A549 (cell line): ENCODE measurements at regions of chr11 and their contacts with region 1.

Region 1: DNA sequence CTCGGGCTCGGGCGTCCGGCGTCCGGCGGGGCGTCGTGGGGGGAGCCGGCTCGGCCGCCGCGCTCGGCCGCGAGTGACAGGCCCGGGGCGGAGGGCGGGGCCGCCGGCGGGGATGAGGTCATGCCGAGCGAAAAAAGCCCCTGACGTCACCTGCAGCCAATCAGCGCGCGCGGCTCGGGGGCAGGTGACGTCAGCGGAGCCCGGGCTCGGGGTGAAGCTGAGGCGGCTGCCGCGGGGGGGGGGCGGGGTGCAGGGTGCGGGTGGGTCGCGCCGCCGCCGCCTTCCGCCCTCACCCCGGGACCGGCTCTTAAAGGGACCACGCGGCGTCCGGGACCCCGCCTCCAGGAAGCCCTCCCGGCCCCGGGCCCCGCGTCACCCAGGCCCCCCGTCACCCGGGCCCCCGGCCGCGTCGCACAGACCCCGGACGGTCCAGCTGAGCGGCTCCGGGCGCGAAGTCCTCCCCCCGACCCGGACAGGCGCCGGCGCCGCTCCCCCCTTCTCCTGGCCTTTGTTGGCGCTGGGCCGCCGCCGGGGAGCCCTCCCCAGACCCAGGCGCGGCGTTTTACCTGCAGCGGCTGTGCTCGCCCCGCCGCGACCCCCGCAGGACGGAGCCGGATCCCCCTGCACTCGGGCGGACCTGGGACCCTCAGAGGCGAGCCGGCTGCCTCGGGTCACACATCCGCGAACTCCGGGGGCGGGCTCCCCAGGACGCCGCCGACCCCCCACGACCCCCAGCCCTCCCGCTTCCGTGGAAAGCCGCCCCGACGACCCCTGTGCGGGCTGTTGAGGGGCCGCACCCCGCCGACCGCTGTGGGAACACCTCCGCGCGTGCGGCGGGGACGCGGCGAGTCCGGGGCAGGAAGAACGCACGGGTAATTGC is at the start of gene DUSP8:
- DNase-seq: peak; percentile 87 to 90
- ATAC-seq: peak; percentile 13 to 35
- H3K4me3 ChIP-seq: peak within 1 kb of the TSS; percentile 74
- H3K27ac ChIP-seq: peak within 1 kb of the TSS; percentile 89 to 95
- H3K4me1 ChIP-seq: peaks cover 37% of the 10 kb centered on the region
- CTCF ChIP-seq: no peak
- EP300 ChIP-seq: peak in 1 of 2 experiments; percentile 23; a peak in 1 of 5 replicates
- POLR2A ChIP-seq: no peak
- RAD21 ChIP-seq: no peak
- polyA plus RNA-seq, gene DUSP8: 2.6 and 3.6 TPM in 2 replicates

Region 2: DNA sequence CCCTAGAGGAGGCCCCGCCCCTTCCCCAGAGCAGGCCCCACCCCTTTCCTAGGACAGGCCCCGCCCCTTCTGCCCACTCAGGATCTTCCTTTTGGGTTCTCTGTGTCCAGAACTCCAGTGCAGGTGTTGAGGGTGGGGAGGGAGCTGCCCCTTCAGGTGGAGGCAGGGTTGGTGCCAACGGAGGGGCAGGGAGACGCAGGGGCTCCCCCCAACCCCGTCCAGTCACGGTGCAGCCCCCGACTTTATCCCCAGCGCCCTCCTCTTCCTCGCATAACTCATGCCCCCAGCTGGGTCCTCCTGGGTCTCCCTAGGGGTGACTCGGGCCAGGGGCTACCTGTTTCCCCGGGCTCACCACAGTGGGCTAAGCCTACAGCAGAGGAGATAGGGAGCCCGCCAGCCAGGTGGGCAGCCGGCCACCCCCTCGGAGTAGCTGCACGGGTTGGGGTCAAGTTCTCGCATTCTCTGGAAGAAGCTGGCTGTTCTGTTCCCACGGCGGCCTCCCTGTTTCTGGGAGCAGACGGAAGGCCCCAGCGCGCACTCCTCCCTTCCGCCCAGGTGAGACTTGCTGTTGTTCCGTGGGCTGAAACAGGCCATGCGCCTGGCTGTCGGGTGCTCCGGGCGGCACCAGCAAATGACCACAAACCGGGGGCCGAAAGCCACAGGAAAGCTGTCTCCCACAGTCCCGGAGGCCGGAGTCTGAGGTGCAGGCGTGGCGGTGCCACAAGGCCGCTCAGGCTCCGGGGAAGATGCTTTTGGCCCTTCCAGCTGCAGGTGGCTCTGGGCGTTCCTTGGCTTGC is 458.8 kb before region 1 on chr11:
- CTCF ChIA-PET with region 1: interaction called, 12 read pairs
- POLR2A ChIA-PET with region 1: no interaction called
- DNase-seq: no peak
- ATAC-seq: peak; percentile 28 to 34; a peak in 4 of 6 replicates
- H3K4me3 ChIP-seq: no peak overlapping the region
- H3K27ac ChIP-seq: peak overlapping the region; percentile 2 to 41; a peak in 4 of 6 replicates
- H3K4me1 ChIP-seq: 0 out of 3 replicates have a peak, but pooled peaks cover 5% of the 10 kb centered on the region
- CTCF ChIP-seq: no peak
- EP300 ChIP-seq: no peak
- POLR2A ChIP-seq: no peak
- RAD21 ChIP-seq: no peak

Region 3: GRCh38 chr11:1252371-1253102 is 319.9 kb before region 1 on chr11:
- CTCF ChIA-PET with region 1: no interaction called
- POLR2A ChIA-PET with region 1: no interaction called
- DNase-seq: no peak
- ATAC-seq: no peak
- H3K4me3 ChIP-seq: no peak overlapping the region
- H3K27ac ChIP-seq: no peak overlapping the region
- H3K4me1 ChIP-seq: no peaks in the 10 kb centered on the region
- CTCF ChIP-seq: no peak
- EP300 ChIP-seq: no peak
- POLR2A ChIP-seq: no peak
- RAD21 ChIP-seq: no peak

Region 4: GRCh38 chr11:1523779-1524178 is 48.7 kb before region 1 on chr11:
- CTCF ChIA-PET with region 1: interaction called, 15 read pairs
- POLR2A ChIA-PET with region 1: no interaction called
- DNase-seq: no peak
- ATAC-seq: no peak
- H3K4me3 ChIP-seq: no peak overlapping the region
- H3K27ac ChIP-seq: no peak overlapping the region
- H3K4me1 ChIP-seq: no peaks in the 10 kb centered on the region
- CTCF ChIP-seq: no peak
- EP300 ChIP-seq: no peak
- POLR2A ChIP-seq: no peak
- RAD21 ChIP-seq: no peak

Region 5: GRCh38 chr11:1553808-1554594 is 18.4 kb before region 1 on chr11:
- CTCF ChIA-PET with region 1: interaction called, 719 read pairs
- POLR2A ChIA-PET with region 1: interaction called, 4 read pairs
- DNase-seq: no peak
- ATAC-seq: no peak; a peak in 1 of 6 replicates
- H3K4me3 ChIP-seq: no peak overlapping the region
- H3K27ac ChIP-seq: 0 out of 6 replicates have a peak overlapping the region, but pooled peaks of 1 of the 2 experiments have one; percentile 21
- H3K4me1 ChIP-seq: peaks cover 38% of the 10 kb centered on the region
- CTCF ChIP-seq: no peak
- EP300 ChIP-seq: no peak
- POLR2A ChIP-seq: no peak
- RAD21 ChIP-seq: no peak

Region 6: DNA sequence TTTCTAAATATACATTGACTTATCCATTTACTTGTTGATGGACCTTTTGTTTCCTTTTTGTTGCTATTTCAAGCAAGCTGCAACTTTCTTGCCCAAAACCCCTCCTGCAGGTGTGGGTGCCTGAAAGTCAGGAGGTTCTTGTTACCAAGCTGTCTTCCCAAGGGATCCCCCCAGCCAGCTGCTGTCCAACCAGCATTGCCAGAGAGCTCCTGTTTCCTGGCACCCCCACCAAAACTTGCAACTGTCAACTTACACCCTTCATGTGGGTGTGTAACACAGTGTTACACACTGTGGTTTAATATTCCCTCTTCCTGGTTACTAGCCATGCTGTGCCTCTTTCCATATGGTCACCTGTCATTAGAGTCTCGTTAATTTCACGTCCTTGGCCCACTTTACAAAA is 14.3 kb after region 1 on chr11:
- CTCF ChIA-PET with region 1: interaction called, 33 read pairs
- POLR2A ChIA-PET with region 1: no interaction called
- DNase-seq: no peak
- ATAC-seq: no peak
- H3K4me3 ChIP-seq: no peak overlapping the region
- H3K27ac ChIP-seq: no peak overlapping the region
- H3K4me1 ChIP-seq: peaks cover 15% of the 10 kb centered on the region
- CTCF ChIP-seq: no peak
- EP300 ChIP-seq: no peak
- POLR2A ChIP-seq: no peak
- RAD21 ChIP-seq: no peak

Region 7: GRCh38 chr11:1598816-1599215 is 26.4 kb after region 1 on chr11:
- CTCF ChIA-PET with region 1: interaction called, 48 read pairs
- POLR2A ChIA-PET with region 1: no interaction called
- DNase-seq: no peak
- ATAC-seq: no peak
- H3K4me3 ChIP-seq: no peak overlapping the region
- H3K27ac ChIP-seq: no peak overlapping the region
- H3K4me1 ChIP-seq: no peaks in the 10 kb centered on the region
- CTCF ChIP-seq: no peak
- EP300 ChIP-seq: no peak
- POLR2A ChIP-seq: no peak
- RAD21 ChIP-seq: no peak